Breast epithelium (tissue), 4 donors: ENCODE measurements at regions of chr2 and their contacts with region 1.

Region 1: GRCh38 chr2:203814661-203815540 is 52.7 kb upstream of the CTLA4 start:
- DNase-seq: peak in 1 of 2 donors; percentile 35
- H3K4me3 ChIP-seq: peak overlapping the region in 1 of 3 donors; percentile 39
- H3K27ac ChIP-seq: no peak overlapping the region
- H3K4me1 ChIP-seq: no peaks in the 10 kb centered on the region
- H3K27me3 ChIP-seq: no peaks in the 10 kb centered on the region
- CTCF ChIP-seq: peak; percentile 57 to 86 (median 84)
- POLR2A ChIP-seq: no peak

Region 2: GRCh38 chr2:203484266-203485112 is 330.4 kb before region 1 on chr2:
- intact Hi-C with region 1: loop called (anchors 10 kb)
- DNase-seq: no peak
- H3K4me3 ChIP-seq: no peak overlapping the region
- H3K27ac ChIP-seq: no peak overlapping the region
- H3K4me1 ChIP-seq: no peaks in the 10 kb centered on the region
- H3K27me3 ChIP-seq: no peaks in the 10 kb centered on the region
- CTCF ChIP-seq: peak in 2 of 3 donors; percentile 59 to 60
- POLR2A ChIP-seq: no peak

Region 3: GRCh38 chr2:203830304-203831055 is 15.6 kb after region 1 on chr2:
- intact Hi-C with region 1: no loop called
- DNase-seq: no peak
- H3K4me3 ChIP-seq: no peak overlapping the region
- H3K27ac ChIP-seq: no peak overlapping the region
- H3K4me1 ChIP-seq: no peaks in the 10 kb centered on the region
- H3K27me3 ChIP-seq: no peaks in the 10 kb centered on the region
- CTCF ChIP-seq: no peak
- POLR2A ChIP-seq: no peak